ENCODE measurements at regions of chr17 and their contacts with region 1.

Region 1: DNA sequence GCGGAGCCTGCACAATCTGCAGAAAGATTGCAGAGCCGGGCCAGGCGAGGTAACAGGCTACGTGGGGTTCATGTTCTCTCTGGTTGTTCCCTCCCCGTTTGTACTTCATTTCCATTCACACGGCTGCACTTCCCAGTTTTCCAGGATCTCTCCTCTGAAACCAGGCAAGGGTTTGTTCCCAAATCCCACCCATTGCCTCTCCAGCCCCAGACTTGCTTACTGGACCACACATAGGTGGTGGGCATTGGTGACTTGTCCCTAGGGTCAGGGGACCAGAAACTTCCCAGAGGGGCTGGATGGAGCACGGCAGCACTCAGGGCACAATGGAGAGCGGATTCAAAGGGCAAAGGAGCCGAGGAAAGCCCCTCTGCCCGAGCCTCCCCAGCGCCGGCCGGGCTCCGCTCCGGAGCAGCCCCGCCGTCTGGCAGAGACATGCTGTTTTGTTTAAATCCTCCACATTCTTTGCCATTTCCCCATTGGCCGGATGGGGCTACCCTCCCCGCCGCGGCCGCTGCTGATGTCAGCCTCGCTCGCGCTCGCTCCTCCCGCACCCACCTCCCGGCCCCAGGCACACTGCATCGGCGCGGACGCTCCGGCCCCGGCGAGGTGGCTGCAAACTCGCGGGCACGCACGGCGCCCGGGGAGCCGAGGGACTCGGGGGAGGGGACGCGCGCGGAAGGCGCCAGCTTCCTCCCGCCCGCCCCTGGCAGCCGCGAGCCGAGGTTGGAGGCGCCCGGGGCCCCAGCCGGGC is at the start of gene PITPNC1:
- DNase-seq: peak; percentile 81
- H3K4me3 Mint-ChIP-seq: peak within 1 kb of the TSS; percentile 88
- H3K27ac Mint-ChIP-seq: peak within 1 kb of the TSS; percentile 84
- H3K4me1 Mint-ChIP-seq: peaks cover 33% of the 10 kb centered on the region
- H3K27me3 Mint-ChIP-seq: peaks cover 2% of the 10 kb centered on the region
- total RNA-seq, gene PITPNC1: 17.7 and 18.3 TPM in 2 replicates

Region 2: GRCh38 chr17:67353929-67354574 is 22.9 kb before region 1 on chr17:
- intact Hi-C with region 1: no loop called
- DNase-seq: no peak
- H3K4me3 Mint-ChIP-seq: no peak overlapping the region
- H3K27ac Mint-ChIP-seq: no peak overlapping the region
- H3K4me1 Mint-ChIP-seq: peaks cover 16% of the 10 kb centered on the region
- H3K27me3 Mint-ChIP-seq: no peaks in the 10 kb centered on the region

Region 3: GRCh38 chr17:67390646-67391384 is 13.9 kb after region 1 on chr17:
- intact Hi-C with region 1: loop called (anchors 1 kb)
- DNase-seq: peak; percentile 70
- H3K4me3 Mint-ChIP-seq: peak overlapping the region; percentile 65
- H3K27ac Mint-ChIP-seq: peak overlapping the region; percentile 89
- H3K4me1 Mint-ChIP-seq: peaks cover 55% of the 10 kb centered on the region
- H3K27me3 Mint-ChIP-seq: no peaks in the 10 kb centered on the region

Region 4: GRCh38 chr17:67475236-67475937 is 98.5 kb after region 1 on chr17:
- intact Hi-C with region 1: loop called (anchors 1 kb)
- DNase-seq: peak; percentile 78
- H3K4me3 Mint-ChIP-seq: peak overlapping the region; percentile 70
- H3K27ac Mint-ChIP-seq: peak overlapping the region; percentile 92
- H3K4me1 Mint-ChIP-seq: peaks cover 57% of the 10 kb centered on the region
- H3K27me3 Mint-ChIP-seq: no peaks in the 10 kb centered on the region

Region 5: GRCh38 chr17:67629971-67630320 is 253.0 kb after region 1 on chr17:
- intact Hi-C with region 1: loop called (anchors 1 kb)
- DNase-seq: no peak
- H3K4me3 Mint-ChIP-seq: no peak overlapping the region
- H3K27ac Mint-ChIP-seq: no peak overlapping the region
- H3K4me1 Mint-ChIP-seq: no peaks in the 10 kb centered on the region
- H3K27me3 Mint-ChIP-seq: no peaks in the 10 kb centered on the region

Region 6: GRCh38 chr17:67717624-67718329 is 340.9 kb after region 1 on chr17 and contains the start of gene NOL11:
- intact Hi-C with region 1: loop called (anchors 1 kb)
- DNase-seq: peak; percentile 99
- H3K4me3 Mint-ChIP-seq: peak within 1 kb of the TSS; percentile 99
- H3K27ac Mint-ChIP-seq: peak within 1 kb of the TSS; percentile 99
- H3K4me1 Mint-ChIP-seq: peaks cover 16% of the 10 kb centered on the region
- H3K27me3 Mint-ChIP-seq: peaks cover 4% of the 10 kb centered on the region
- total RNA-seq, gene NOL11: 107 and 118 TPM in 2 replicates

Measured in activated T-helper 1 cell treated with anti-CD3 and anti-CD28 coated beads, Interleukin-12 subunit alpha, Interleukin-12 subunit beta, Interleukin-2, Interleukin-4 antibody, amounts not matched to agents 30 ng/mL and 10 ng/mL and 1 ng/mL, durations not matched to agents 14 hours and 24 hours and 36 hours (primary cell).